ENCODE measurements at regions of chr4 and their contacts with region 1.

Region 1: DNA sequence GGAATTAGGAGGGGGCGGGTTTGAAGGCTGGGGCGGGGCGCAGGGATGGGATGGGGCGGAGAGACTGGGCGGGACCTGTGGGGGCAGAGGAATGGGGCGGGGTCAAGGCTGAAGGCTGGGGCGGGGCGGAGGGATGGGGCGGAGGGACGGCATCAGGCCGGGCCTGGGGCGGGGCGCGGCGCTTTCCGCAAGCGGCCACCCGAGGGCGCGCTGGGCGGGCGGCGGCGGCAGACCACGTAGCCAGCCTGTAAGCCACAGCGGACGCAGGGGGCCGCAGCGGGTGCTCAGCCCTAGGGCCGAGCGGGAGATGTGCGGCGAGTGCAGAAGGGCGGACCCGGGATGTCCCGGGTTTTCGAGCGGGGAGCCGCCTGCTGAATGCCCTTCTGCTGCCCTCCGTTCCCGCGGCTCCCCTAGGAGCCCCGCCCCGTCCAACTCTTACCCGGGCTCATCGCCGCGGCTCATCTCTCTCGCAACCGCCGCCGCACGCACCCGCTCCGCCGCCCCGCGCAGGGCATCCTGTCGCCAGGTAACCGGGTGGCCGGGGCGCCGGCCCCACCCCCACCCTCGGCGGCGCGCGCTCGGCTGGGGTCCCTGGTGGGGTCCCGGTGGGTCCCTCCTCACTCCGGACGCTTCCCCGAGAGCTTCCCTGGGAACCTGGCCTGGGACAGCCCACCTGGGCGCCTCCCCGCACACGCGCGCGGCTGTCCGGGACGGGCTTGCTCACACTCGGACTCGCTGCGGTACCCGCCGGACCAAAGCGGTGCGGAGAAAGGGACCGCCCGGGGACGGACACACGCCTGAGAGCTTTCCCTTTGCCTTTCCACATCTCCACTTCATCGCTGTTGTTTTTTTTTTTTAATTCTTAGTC is at the start of gene CCDC110:
- DNase-seq: peak; percentile 92 to 97
- H3K4me3 ChIP-seq: peak within 1 kb of the TSS; percentile 72 to 78
- H3K27ac ChIP-seq: peak within 1 kb of the TSS; percentile 83 to 84
- H3K4me1 ChIP-seq: peaks cover 0 to 31% (median 2%) of the 10 kb centered on the region in 4 donors
- H3K27me3 ChIP-seq: no peaks in the 10 kb centered on the region
- CTCF ChIP-seq: peak; percentile 70 to 82

Region 2: DNA sequence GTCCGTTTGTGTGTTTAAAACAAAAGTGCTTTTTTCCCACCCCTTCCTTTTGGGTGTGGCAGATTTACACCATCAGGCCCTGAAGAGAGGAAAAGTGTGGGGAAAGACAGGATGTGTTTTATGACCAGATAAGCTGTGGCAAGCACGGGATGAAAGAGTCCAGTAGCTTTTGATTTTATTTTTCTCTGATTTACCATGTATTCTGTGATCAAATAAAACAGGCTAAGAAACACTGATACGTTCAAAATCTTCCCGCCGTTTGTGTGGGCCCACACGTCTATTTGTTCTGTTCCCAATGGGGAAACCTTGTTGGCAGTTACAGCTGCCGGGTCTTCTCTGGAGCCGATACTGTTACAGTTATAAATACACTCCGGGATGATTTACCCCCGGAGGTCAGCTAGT is 86.5 kb before region 1 on chr4:
- intact Hi-C with region 1: no loop called
- DNase-seq: no peak
- H3K4me3 ChIP-seq: peak overlapping the region in 1 of 2 donors; percentile 2
- H3K27ac ChIP-seq: peak overlapping the region; percentile 12 to 23
- H3K4me1 ChIP-seq: peaks cover 0 to 23% (median 1%) of the 10 kb centered on the region in 4 donors
- H3K27me3 ChIP-seq: no peaks in the 10 kb centered on the region
- CTCF ChIP-seq: no peak

Region 3: DNA sequence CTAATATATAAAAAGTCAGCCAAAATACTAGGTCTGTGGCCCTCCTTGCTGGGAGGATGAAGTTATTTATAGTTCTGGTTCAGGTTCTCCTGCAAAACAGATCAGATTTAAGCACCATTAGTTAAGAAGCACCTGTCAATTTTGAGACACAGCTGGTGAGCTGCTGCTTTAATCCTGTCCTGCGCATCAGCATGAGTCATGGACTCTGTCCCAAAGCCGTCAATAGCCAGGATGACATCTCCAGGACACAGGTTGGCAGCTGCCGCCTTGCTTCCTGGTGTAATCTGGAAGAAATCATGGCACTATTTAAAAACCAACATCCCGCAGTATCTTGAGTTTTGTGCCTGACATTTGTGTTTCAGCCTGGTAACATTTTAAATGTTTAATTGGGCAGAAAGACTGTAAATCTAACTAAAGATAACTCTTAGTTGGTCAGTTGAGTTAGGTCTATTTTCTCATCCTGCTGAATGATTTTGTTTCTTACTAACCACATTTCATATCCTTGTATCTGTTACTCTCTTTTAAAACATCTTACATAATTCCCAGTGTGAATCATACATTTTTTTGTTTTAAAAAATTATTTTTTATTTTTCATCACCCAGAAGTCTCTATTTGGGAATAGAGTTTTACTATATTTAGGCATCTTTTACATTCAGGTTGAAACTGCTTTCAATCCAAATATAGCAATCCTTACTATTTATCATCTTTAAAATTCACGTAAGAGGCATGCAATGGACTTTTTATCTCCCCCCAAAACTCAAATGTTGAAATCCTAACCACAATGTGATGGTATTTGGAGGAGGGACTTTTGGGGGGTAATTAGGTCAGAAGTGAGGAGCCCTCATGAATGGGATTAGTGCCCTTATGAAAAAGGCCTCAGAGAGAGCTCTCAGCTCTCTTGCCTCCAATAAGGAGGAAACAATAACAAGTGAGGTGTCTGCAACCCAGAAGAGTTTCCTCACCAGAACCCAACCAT is 53.7 kb after region 1 on chr4:
- intact Hi-C with region 1: loop called (anchors 10 kb)
- DNase-seq: no peak
- H3K4me3 ChIP-seq: no peak overlapping the region
- H3K27ac ChIP-seq: peak overlapping the region; percentile 63 to 99
- H3K4me1 ChIP-seq: peaks cover 0 to 65% (median 20%) of the 10 kb centered on the region in 4 donors
- H3K27me3 ChIP-seq: no peaks in the 10 kb centered on the region
- CTCF ChIP-seq: no peak

Region 4: GRCh38 chr4:185597532-185598188 is 126.2 kb after region 1 on chr4:
- intact Hi-C with region 1: loop called (anchors 5 kb)
- DNase-seq: peak; percentile 80 to 88
- H3K4me3 ChIP-seq: no peak overlapping the region
- H3K27ac ChIP-seq: peak overlapping the region; percentile 58 to 77
- H3K4me1 ChIP-seq: peaks cover 0 to 54% (median 20%) of the 10 kb centered on the region in 4 donors
- H3K27me3 ChIP-seq: no peaks in the 10 kb centered on the region
- CTCF ChIP-seq: peak; percentile 97 to 100

Region 5: GRCh38 chr4:185665655-185666054 is 194.2 kb after region 1 on chr4:
- intact Hi-C with region 1: no loop called
- DNase-seq: no peak
- H3K4me3 ChIP-seq: no peak overlapping the region
- H3K27ac ChIP-seq: peak overlapping the region in 1 of 2 donors; percentile 36
- H3K4me1 ChIP-seq: peaks cover 0 to 19% (median 3%) of the 10 kb centered on the region in 4 donors
- H3K27me3 ChIP-seq: no peaks in the 10 kb centered on the region
- CTCF ChIP-seq: no peak

Region 6: DNA sequence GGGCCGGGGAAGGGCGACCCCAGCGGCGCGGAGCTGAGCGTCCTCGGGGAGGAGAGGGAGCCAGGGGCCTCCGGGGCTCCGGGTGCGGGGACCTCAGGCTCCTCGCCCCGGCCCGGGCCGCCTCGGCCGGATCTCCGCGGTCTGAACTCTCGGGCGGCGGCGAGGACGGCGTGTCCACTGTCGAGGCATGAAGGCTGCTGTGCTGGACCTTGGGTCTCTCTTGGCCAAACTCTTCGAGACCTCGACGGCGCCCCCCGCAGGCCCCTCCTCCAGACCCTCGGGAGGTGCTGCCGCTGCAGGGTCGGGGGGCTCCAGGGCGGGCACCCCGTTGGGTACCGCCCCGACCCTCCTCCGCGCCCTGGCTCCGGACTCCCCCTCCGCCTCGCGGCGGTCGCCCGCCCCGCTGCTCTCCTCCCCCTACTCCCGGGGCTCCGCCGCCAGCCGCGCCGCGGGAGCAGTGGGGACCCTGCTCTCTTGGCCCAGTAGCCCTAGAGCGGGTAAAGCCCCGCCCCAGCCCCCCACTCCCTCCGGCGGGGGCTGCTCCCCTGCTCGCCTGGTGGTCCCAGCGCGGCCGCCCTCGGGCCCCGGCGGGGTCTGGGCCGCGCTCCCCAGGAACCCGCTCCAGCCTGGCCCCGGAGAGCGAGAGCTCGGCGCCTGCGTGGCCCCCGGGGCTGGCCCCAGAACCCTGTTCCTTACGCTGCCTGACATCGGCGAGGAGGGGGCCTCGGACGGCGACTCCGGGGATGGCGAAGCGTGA is 633.6 kb after region 1 on chr4:
- intact Hi-C with region 1: no loop called
- DNase-seq: no peak
- H3K4me3 ChIP-seq: peak overlapping the region; percentile 39 to 73
- H3K27ac ChIP-seq: peak overlapping the region in 1 of 2 donors; percentile 21
- H3K4me1 ChIP-seq: peaks cover 0 to 18% (median 12%) of the 10 kb centered on the region in 4 donors
- H3K27me3 ChIP-seq: peaks cover 0 to 14% of the 10 kb centered on the region in 2 donors
- CTCF ChIP-seq: no peak